Psoas muscle (tissue), 8 donors: ENCODE measurements at regions of chr12 and their contacts with region 1.

Region 1: GRCh38 chr12:101773650-101774162 is 34.4 kb upstream of the SYCP3 start:
- DNase-seq: peak; percentile 41 to 60
- ATAC-seq: peak; percentile 83 to 85 (median 84)
- H3K4me3 ChIP-seq: no peak overlapping the region
- H3K27ac ChIP-seq: no peak overlapping the region
- H3K4me1 ChIP-seq: peaks cover 21% of the 10 kb centered on the region
- H3K27me3 ChIP-seq: no peaks in the 10 kb centered on the region
- CTCF ChIP-seq: peak; percentile 96

Region 2: DNA sequence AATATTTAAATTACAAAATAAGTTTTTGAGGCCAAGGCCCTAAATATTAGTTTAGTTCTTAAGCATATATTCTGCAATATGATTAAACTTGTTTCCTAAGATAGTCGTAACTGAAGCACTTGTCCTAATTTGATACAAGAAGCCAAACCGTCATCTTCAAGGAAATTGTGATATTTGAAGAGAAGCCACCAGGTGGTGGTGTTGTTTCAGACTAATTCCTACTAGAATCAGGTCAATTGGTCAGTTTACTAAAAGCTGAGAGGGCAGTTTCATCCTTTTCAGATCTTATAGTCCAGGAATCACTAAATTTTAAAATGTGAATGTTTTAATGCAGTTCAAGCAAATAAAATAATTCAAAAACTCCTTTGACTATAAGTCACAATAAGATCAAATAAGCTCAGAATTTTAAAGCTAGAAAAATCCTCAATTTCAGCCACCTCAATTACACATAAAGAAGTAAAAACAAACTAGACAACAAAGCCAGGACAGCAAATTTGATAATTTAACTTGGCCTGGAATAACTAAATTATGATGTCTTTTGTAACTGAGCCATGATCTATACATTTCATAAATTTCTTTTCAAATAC is 359.1 kb before region 1 on chr12:
- intact Hi-C with region 1: loop called in 1 of 2 experiments (anchors 5 kb)
- DNase-seq: no peak
- ATAC-seq: peak in 3 of 4 donors; percentile 48 to 83 (median 59)
- H3K4me3 ChIP-seq: no peak overlapping the region
- H3K27ac ChIP-seq: no peak overlapping the region
- H3K4me1 ChIP-seq: no peaks in the 10 kb centered on the region
- H3K27me3 ChIP-seq: no peaks in the 10 kb centered on the region
- CTCF ChIP-seq: peak; percentile 63

Region 3: DNA sequence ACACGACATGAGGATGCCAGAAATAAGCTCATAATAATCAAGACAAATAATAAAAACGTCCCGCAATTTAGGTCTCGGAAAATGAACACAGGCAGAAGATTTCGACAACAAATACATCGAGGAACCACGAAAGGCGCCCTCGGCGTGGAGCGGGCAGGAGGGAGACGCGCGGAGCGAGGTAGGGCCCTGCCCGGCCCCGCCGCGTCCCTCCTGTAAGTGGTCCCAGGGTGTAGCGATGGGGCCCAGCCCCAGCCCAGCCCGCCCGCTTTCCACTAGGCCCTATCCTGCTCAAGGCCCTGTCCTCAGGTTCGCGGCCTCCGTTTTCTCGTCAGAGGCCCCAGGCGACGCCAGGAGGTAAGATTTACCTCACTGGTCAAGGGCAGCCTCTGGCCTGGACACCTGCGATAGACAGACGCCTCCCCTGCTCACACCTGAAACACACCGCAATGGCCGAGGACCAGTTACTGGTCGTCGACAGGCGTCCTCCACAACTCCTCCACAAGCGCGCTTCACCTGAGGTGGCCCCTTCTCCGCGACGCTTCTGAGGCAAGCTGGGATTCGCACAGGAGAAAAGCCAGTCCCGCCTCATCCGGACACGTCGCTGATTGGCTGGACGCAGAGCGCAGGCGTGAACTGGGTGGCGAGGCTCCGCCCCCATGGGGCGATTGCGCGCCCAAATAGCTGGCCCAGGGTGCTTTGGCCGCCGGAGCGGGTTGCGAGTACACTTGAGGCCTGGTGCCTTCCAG is 34.6 kb before region 1 on chr12 and contains the start of gene SYCP3:
- intact Hi-C with region 1: no loop called
- DNase-seq: no peak
- ATAC-seq: peak in 1 of 4 donors; percentile 25
- H3K4me3 ChIP-seq: no peak within 1 kb of the TSS
- H3K27ac ChIP-seq: no peak within 1 kb of the TSS
- H3K4me1 ChIP-seq: no peaks in the 10 kb centered on the region
- H3K27me3 ChIP-seq: no peaks in the 10 kb centered on the region
- CTCF ChIP-seq: no peak
- total RNA-seq, gene SYCP3: 0.28 TPM in 1 of 4 donors, not detected in the others

Region 4: GRCh38 chr12:101830367-101831325 is 56.9 kb after region 1 on chr12 and contains the start of gene GNPTAB:
- intact Hi-C with region 1: loop called in 1 of 2 experiments (anchors 2 kb)
- DNase-seq: peak; percentile 92 to 96
- ATAC-seq: peak; percentile 94 to 99 (median 98)
- H3K4me3 ChIP-seq: peak within 1 kb of the TSS; percentile 79
- H3K27ac ChIP-seq: peak within 1 kb of the TSS; percentile 90
- H3K4me1 ChIP-seq: peaks cover 18% of the 10 kb centered on the region
- H3K27me3 ChIP-seq: no peaks in the 10 kb centered on the region
- CTCF ChIP-seq: peak; percentile 81
- total RNA-seq, gene GNPTAB: 14.3 to 36.1 (median 19.9) TPM

Region 5: GRCh38 chr12:101839324-101840283 is 65.9 kb after region 1 on chr12:
- intact Hi-C with region 1: loop called in 1 of 2 experiments (anchors 2 kb)
- DNase-seq: peak; percentile 34 to 58
- ATAC-seq: peak; percentile 56 to 89 (median 74)
- H3K4me3 ChIP-seq: no peak overlapping the region
- H3K27ac ChIP-seq: no peak overlapping the region
- H3K4me1 ChIP-seq: no peaks in the 10 kb centered on the region
- H3K27me3 ChIP-seq: no peaks in the 10 kb centered on the region
- CTCF ChIP-seq: peak; percentile 87

Region 6: GRCh38 chr12:102234599-102234998 is 460.9 kb after region 1 on chr12:
- intact Hi-C with region 1: no loop called
- DNase-seq: no peak
- ATAC-seq: no peak
- H3K4me3 ChIP-seq: no peak overlapping the region
- H3K27ac ChIP-seq: no peak overlapping the region
- H3K4me1 ChIP-seq: no peaks in the 10 kb centered on the region
- H3K27me3 ChIP-seq: no peaks in the 10 kb centered on the region
- CTCF ChIP-seq: no peak